ENCODE measurements at regions of chr6 and their contacts with region 1.

Region 1: DNA sequence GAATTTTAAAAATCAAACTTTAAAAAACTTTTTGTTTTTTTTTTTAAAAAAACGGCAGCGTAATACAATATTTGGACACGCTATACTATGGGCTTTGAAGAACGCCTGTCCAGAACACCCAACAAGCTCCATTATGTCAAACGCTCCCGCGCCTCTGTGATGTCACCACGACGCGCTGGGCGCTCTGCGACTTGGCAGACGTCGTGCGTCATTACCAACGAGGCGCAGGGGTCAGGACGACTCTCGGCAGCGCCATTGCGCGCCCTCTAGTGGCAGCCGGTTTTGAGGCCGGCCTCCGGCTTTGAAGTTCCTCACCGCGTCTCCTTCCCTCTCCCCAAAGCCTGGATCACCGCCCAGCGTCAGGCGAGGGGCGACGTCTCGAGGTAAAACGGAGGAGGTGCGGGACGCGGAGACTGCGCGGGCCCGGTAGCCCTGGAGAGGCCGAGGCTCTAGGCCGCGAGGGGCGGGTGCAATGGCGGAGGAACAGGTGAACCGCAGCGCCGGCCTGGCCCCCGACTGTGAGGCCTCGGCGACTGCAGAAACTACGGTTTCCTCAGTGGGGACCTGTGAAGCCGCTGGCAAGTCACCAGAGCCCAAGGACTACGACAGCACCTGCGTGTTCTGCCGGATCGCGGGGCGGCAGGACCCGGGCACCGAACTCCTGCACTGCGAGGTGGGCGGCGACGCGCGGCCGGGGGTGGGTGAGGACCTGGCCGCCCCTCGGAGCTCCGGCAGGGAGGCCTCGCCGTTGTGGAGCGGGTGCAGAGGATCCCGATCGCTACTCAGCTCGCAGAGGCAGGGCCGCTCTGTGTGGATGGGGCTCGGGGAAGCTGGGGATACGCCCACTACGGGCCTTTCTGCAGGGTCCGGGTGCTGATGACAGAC is at the start of gene HINT3:
- DNase-seq: peak; percentile 99
- H3K4me3 Mint-ChIP-seq: no peak within 1 kb of the TSS
- H3K27ac Mint-ChIP-seq: peak within 1 kb of the TSS; percentile 68
- H3K4me1 Mint-ChIP-seq: peaks cover 8% of the 10 kb centered on the region
- H3K27me3 Mint-ChIP-seq: peaks cover 15% of the 10 kb centered on the region

Region 2: DNA sequence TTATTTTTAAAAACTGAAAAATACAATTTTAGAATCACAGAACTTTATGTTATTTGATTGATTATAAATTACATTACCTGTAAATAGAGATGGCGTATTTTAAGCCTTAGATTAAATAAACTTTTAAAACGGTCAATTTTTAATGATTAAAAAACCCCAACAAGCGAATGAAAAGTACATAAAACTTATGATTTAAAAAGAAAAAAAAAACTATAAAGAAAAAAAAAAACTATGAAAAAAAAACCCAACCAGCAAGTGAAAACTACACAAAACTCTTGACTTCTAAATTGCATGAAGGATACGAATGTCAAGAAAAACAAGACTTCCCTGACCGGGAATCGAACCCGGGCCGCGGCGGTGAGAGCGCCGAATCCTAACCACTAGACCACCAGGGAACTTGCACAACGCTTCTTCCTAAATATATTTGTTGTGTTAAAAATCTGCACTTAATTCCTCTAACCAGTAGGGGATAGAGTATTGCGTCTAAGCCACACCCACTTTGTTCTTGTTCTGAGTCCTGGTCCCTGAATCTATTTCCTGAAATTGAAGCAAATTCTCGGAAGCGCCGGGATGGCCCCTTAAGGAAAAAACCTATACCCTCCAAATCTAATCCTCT is 176.7 kb before region 1 on chr6:
- CTCF ChIA-PET with region 1: interaction called, 23 read pairs
- DNase-seq: peak; percentile 87
- H3K4me3 Mint-ChIP-seq: no peak overlapping the region
- H3K27ac Mint-ChIP-seq: no peak overlapping the region
- H3K4me1 Mint-ChIP-seq: peaks cover 16% of the 10 kb centered on the region
- H3K27me3 Mint-ChIP-seq: peaks cover 20% of the 10 kb centered on the region

Region 3: GRCh38 chr6:125798734-125799508 is 157.8 kb before region 1 on chr6:
- CTCF ChIA-PET with region 1: interaction called, 140 read pairs
- DNase-seq: no peak
- H3K4me3 Mint-ChIP-seq: no peak overlapping the region
- H3K27ac Mint-ChIP-seq: no peak overlapping the region
- H3K4me1 Mint-ChIP-seq: peaks cover 22% of the 10 kb centered on the region
- H3K27me3 Mint-ChIP-seq: no peaks in the 10 kb centered on the region

Region 4: DNA sequence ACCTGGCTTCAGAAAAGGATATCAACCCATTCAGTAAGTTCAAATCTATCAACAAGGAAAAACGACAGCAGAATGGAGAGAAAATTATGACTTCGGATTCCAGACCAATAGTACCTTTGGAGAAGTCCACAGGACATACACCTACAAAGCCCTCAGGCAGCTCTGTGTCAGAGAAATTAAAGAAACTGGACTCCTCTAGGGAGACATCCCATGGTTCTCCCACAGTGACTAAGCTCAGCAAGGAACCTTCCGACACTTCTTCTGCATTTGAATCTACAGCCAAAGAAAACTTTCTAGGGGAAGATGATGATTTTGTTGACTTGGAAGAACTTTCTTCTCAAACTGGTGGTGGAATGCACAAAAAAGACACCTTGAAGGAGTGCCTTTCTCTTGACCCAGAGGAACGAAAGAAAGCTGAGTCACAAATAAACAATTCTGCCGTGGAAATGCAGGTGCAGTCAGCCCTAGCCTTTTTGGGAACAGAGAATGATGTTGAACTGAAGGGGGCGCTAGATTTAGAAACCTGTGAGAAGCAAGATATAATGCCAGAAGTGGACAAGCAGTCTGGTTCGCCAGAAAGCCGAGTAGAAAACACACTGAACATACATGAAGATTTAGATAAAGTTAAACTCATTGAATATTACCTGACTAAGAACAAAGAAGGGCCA is 67.6 kb before region 1 on chr6:
- CTCF ChIA-PET with region 1: interaction called, 25 read pairs
- DNase-seq: peak; percentile 29
- H3K4me3 Mint-ChIP-seq: no peak overlapping the region
- H3K27ac Mint-ChIP-seq: no peak overlapping the region
- H3K4me1 Mint-ChIP-seq: no peaks in the 10 kb centered on the region
- H3K27me3 Mint-ChIP-seq: no peaks in the 10 kb centered on the region

Region 5: DNA sequence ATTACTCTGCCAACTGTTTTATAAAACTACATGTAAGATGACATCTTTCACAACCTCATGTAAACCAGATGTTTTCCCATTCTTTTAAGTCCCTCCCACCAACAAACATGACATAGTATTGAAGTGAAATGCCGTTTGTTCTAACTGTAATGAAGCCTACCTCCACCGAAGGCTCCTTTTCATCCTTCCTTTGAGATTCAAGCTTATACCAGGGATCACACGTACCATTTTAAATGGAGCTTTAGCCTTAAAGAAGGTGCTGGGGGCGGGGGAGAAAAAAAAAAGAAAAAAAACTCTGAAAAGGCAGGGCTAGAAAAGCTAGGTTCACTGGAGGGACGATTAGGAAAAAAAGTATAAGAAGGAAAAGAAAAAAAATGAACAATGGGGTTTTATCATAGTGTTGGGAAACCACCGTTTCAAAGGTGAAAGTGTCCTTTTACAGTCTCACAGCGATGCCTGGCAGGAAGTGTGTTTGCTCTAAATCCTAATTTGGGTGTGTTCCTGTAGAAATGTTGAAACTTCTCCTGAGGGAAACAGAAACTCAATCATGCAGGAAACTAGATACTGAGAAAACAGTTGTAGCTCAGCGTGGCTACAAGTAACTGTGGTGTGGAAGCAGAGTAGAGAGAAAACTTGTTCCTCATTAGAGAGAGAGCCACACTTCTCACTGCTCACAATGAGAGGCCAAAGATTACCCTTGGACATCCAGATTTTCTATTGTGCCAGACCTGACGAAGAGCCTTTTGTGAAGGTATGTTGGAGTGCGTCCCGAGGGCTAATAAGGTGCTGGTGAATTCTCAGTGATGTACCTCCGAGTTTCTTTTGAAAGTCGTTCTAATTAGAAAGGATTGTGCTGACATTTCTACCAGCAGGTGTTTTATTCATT is 37.8 kb before region 1 on chr6:
- CTCF ChIA-PET with region 1: interaction called, 20 read pairs
- DNase-seq: peak; percentile 70
- H3K4me3 Mint-ChIP-seq: peak overlapping the region; percentile 79
- H3K27ac Mint-ChIP-seq: peak overlapping the region; percentile 94
- H3K4me1 Mint-ChIP-seq: peaks cover 44% of the 10 kb centered on the region
- H3K27me3 Mint-ChIP-seq: no peaks in the 10 kb centered on the region

Region 6: DNA sequence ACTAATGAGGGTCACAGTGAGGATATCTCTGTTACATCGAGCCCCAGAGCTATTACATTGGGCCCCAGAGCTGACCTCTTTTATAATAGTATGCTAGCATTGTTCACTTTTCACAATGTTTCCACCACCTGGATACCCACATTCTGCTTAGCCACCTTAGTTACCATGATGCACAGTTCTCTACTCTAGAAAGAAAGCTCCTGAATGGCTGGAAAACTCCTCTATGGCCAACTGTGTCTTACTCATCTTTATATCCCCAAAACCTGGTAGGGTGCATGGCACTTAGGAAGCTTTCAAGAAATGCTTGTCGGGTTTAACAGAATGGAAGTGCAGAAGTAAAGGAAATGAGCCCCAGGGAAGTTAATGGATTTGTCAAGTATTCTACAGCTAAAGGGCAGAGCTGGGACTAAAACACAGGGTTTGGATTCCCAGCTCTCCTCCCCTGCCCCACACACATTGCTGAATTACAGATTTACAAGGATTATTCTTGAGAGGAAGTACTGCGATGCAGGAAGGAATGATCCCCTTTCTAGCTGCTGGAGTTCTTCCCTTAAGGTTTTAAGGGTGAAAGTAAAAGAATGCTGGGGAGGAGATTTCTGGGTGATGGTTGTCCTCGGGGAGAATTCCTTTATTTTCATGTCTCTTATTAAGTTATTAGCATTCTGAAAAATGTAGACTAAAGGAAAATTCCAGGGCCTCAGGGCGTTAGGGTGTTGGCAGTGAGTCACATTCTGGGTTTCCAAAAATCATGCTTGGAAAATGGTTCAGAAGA is 16.3 kb before region 1 on chr6:
- CTCF ChIA-PET with region 1: interaction called, 10 read pairs
- DNase-seq: no peak
- H3K4me3 Mint-ChIP-seq: no peak overlapping the region
- H3K27ac Mint-ChIP-seq: no peak overlapping the region
- H3K4me1 Mint-ChIP-seq: no peaks in the 10 kb centered on the region
- H3K27me3 Mint-ChIP-seq: peaks cover 17% of the 10 kb centered on the region

Measured in activated naive CD4-positive, alpha-beta T cell treated with anti-CD3 and anti-CD28 coated beads, Interleukin-2, amount 10 ng/mL, durations not matched to agents 7 days and 5 days (primary cell).